ENCODE measurements at regions of chr5 and their contacts with region 1.

Region 1: DNA sequence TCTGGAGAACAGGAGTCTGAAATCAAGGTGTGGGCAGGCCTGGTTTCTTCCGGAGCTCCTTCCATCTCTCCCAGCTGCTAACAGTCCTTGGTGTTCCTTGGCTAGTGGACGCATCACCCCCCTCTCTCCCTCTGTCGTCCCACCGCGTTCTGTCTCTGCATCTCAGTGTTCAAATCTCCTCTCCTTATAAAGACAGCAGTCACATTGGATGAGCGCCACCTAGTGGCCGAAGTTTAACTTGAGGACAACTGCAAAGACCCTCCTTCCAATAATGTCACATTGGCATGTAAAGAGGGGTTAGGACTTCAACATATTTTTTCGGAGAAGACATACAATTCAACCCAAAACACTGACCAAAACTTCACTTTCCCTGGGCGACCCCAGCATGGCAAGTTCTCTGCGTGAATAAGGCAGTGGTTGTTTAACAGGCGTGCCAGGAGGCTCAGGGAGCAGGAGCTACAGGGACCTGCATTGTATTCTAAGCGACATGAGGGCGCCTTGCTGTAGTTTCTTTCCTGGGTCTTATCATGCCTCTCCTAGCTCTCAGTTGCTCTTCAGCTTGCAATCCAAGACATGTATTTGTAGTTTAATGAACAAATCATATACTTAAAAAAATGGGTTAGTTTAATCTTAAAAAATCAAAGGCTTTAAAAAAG is 27.9 kb upstream of the BASP1 start:
- DNase-seq: peak; percentile 49 to 83
- ATAC-seq: peak; percentile 64 to 79
- H3K4me3 ChIP-seq: no peak overlapping the region
- H3K27ac ChIP-seq: peak overlapping the region; percentile 8 to 75; a peak in 5 of 6 replicates
- H3K4me1 ChIP-seq: peaks cover 51% of the 10 kb centered on the region
- CTCF ChIP-seq: peak; percentile 91
- EP300 ChIP-seq: no peak
- POLR2A ChIP-seq: no peak
- RAD21 ChIP-seq: peak; percentile 86 to 95

Region 2: DNA sequence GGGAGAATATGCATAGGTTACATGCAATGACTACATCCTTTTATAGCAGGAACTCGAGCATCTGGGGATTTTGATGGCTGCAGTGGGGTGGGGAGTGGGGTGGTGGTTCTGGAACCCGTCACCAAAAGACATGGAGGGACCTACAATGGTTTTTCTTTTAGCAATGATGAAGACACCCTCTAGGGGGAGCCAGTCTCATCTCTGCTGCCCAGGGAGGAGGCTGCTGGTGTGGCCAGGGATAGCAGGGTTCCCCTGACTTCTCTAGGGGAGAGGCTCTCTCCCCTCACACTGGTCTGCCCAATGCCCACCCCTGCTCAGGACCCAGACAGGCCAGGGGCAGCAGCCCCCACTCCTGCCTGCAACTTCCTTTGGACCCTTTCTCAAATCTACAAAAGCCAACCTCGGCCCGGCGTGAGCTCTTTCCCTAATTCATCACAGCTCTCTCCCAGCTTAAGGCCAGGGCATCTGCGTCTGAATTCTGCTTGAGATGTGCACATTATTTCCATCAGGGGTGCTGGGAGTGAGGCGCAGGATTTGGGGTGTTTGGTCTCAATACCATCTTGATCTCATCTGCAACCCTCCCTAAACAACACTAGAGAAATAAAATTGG is 499.2 kb before region 1 on chr5:
- CTCF ChIA-PET with region 1: interaction called, 36 read pairs
- POLR2A ChIA-PET with region 1: no interaction called
- DNase-seq: peak; percentile 54 to 88
- ATAC-seq: peak; percentile 94 to 96
- H3K4me3 ChIP-seq: no peak overlapping the region
- H3K27ac ChIP-seq: no peak overlapping the region
- H3K4me1 ChIP-seq: no peaks in the 10 kb centered on the region
- CTCF ChIP-seq: peak; percentile 69
- EP300 ChIP-seq: no peak
- POLR2A ChIP-seq: no peak
- RAD21 ChIP-seq: peak; percentile 51 to 66

Region 3: GRCh38 chr5:16791036-16791705 is 398.3 kb before region 1 on chr5:
- CTCF ChIA-PET with region 1: interaction called, 54 read pairs
- POLR2A ChIA-PET with region 1: no interaction called
- DNase-seq: peak; percentile 55 to 64
- ATAC-seq: peak; percentile 54 to 58; a peak in 3 of 6 replicates
- H3K4me3 ChIP-seq: no peak overlapping the region
- H3K27ac ChIP-seq: peak overlapping the region; percentile 18 to 49; a peak in 4 of 6 replicates
- H3K4me1 ChIP-seq: peaks cover 34% of the 10 kb centered on the region
- CTCF ChIP-seq: peak; percentile 89
- EP300 ChIP-seq: no peak
- POLR2A ChIP-seq: no peak
- RAD21 ChIP-seq: peak; percentile 87 to 89

Region 4: DNA sequence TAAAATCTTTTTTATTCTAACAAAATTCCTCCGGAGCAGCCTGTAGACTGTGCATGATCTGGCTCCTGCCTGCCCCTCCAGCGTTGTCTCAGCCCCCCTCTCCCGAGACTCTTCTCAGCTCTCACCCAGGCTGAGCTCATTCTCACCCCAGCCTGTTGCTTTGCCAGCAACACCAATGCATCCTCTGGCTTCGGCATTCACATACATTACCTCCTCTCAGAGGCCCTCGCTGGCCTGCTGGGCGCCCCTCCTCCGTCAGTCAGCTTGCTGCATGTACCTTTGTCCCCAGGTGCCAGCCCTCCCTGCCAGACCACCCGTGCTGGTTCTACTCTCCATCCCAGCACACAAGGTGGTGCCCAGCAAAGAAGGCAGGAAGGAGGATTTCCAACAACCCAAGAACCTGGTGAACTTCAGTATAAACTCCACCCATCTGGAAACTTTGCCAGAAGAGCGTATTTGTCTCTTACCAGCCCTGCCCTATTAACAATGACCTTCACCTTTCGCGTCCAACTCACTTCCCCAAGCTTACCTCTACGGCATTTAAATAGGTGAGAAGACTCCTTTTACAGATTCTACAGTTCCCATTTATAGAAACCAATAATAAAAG is 288.4 kb before region 1 on chr5:
- CTCF ChIA-PET with region 1: interaction called, 14 read pairs
- POLR2A ChIA-PET with region 1: no interaction called
- DNase-seq: no peak
- ATAC-seq: no peak
- H3K4me3 ChIP-seq: no peak overlapping the region
- H3K27ac ChIP-seq: peak overlapping the region; percentile 95
- H3K4me1 ChIP-seq: peaks cover 96% of the 10 kb centered on the region
- CTCF ChIP-seq: no peak
- EP300 ChIP-seq: no peak
- POLR2A ChIP-seq: no peak
- RAD21 ChIP-seq: no peak

Region 5: GRCh38 chr5:17000291-17000939 is 189.1 kb before region 1 on chr5:
- CTCF ChIA-PET with region 1: interaction called, 11 read pairs
- POLR2A ChIA-PET with region 1: no interaction called
- DNase-seq: peak; percentile 39 to 64
- ATAC-seq: peak; percentile 93 to 95
- H3K4me3 ChIP-seq: no peak overlapping the region
- H3K27ac ChIP-seq: peak overlapping the region; percentile 64 to 86
- H3K4me1 ChIP-seq: peaks cover 19% of the 10 kb centered on the region
- CTCF ChIP-seq: no peak
- EP300 ChIP-seq: no peak
- POLR2A ChIP-seq: no peak
- RAD21 ChIP-seq: 0 out of 5 replicates have a peak, but pooled peaks of 1 of the 2 experiments have one; percentile 12

Region 6: GRCh38 chr5:17132444-17133083 is 56.9 kb before region 1 on chr5:
- CTCF ChIA-PET with region 1: interaction called, 26 read pairs
- POLR2A ChIA-PET with region 1: no interaction called
- DNase-seq: peak; percentile 37 to 48
- ATAC-seq: 0 out of 6 replicates have a peak, but pooled peaks of 1 of the 2 experiments have one; percentile 25
- H3K4me3 ChIP-seq: no peak overlapping the region
- H3K27ac ChIP-seq: peak overlapping the region; percentile 20 to 67; a peak in 4 of 6 replicates
- H3K4me1 ChIP-seq: peaks cover 25% of the 10 kb centered on the region
- CTCF ChIP-seq: peak; percentile 73
- EP300 ChIP-seq: no peak
- POLR2A ChIP-seq: no peak
- RAD21 ChIP-seq: peak; percentile 59 to 68

Measured in A549 (cell line).